ENCODE measurements at regions of chr10 and their contacts with region 1.

Region 1: GRCh38 chr10:99303899-99304861 is 25.0 kb upstream of the CNNM1 start:
- DNase-seq: no peak
- ATAC-seq: no peak
- H3K4me3 ChIP-seq: no peak overlapping the region
- H3K4me3 Mint-ChIP-seq: no peak overlapping the region
- H3K27ac ChIP-seq: no peak overlapping the region
- H3K27ac Mint-ChIP-seq: no peak overlapping the region
- H3K4me1 ChIP-seq: no peaks in the 10 kb centered on the region
- H3K4me1 Mint-ChIP-seq: no peaks in the 10 kb centered on the region
- H3K27me3 ChIP-seq: no peaks in the 10 kb centered on the region
- H3K27me3 Mint-ChIP-seq: peaks cover 11 to 33% (median 20%) of the 10 kb centered on the region in 5 donors

Region 2: GRCh38 chr10:99290306-99290705 is 13.9 kb before region 1 on chr10:
- CTCF ChIA-PET with region 1: interaction called, 4 read pairs
- POLR2A ChIA-PET with region 1: no interaction called
- intact Hi-C with region 1: loop called in 1 of 2 experiments (anchors 1 kb)
- DNase-seq: no peak
- ATAC-seq: no peak
- H3K4me3 ChIP-seq: no peak overlapping the region
- H3K4me3 Mint-ChIP-seq: no peak overlapping the region
- H3K27ac ChIP-seq: no peak overlapping the region
- H3K27ac Mint-ChIP-seq: no peak overlapping the region
- H3K4me1 ChIP-seq: no peaks in the 10 kb centered on the region
- H3K4me1 Mint-ChIP-seq: no peaks in the 10 kb centered on the region
- H3K27me3 ChIP-seq: no peaks in the 10 kb centered on the region
- H3K27me3 Mint-ChIP-seq: peaks cover 4 to 19% (median 11%) of the 10 kb centered on the region in 5 donors

Region 3: GRCh38 chr10:99331207-99331803 is 27.1 kb after region 1 on chr10:
- CTCF ChIA-PET with region 1: no interaction called
- POLR2A ChIA-PET with region 1: no interaction called
- intact Hi-C with region 1: no loop called
- DNase-seq: no peak
- ATAC-seq: no peak
- H3K4me3 ChIP-seq: no peak overlapping the region
- H3K4me3 Mint-ChIP-seq: peak overlapping the region; percentile 11 to 71 (median 54)
- H3K27ac ChIP-seq: no peak overlapping the region
- H3K27ac Mint-ChIP-seq: no peak overlapping the region
- H3K4me1 ChIP-seq: no peaks in the 10 kb centered on the region
- H3K4me1 Mint-ChIP-seq: peaks cover 0 to 26% (median 15%) of the 10 kb centered on the region in 7 donors
- H3K27me3 ChIP-seq: peaks cover 0 to 6% of the 10 kb centered on the region in 2 donors
- H3K27me3 Mint-ChIP-seq: peaks cover 30 to 54% (median 42%) of the 10 kb centered on the region in 5 donors

Region 4: DNA sequence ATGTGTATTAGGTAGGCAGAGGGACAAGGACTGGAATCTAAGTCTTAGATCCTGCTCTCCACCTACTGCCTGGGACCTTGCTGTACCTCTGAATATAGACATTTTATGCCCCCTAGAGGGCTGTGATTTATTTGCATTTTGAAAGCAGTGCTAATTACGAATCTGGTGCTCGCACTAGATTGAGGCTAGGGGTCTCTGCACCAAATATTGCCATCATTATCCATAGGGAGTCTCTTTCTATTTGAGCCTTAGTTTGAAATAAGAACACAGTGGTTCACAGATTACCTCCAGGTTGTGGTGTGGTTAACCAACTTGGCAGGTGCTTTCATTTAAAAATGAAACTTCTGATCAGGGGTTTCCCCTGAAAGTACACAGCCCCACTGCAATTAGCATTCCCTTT is 66.8 kb after region 1 on chr10:
- CTCF ChIA-PET with region 1: no interaction called
- POLR2A ChIA-PET with region 1: no interaction called
- intact Hi-C with region 1: no loop called
- DNase-seq: no peak
- ATAC-seq: no peak
- H3K4me3 ChIP-seq: no peak overlapping the region
- H3K4me3 Mint-ChIP-seq: peak overlapping the region in 1 of 10 donors; percentile 5
- H3K27ac ChIP-seq: no peak overlapping the region
- H3K27ac Mint-ChIP-seq: no peak overlapping the region
- H3K4me1 ChIP-seq: no peaks in the 10 kb centered on the region
- H3K4me1 Mint-ChIP-seq: peaks cover 0 to 10% (median 5%) of the 10 kb centered on the region in 7 donors
- H3K27me3 ChIP-seq: no peaks in the 10 kb centered on the region
- H3K27me3 Mint-ChIP-seq: peaks cover 10 to 86% (median 23%) of the 10 kb centered on the region in 5 donors

Measured in naive thymus-derived CD4-positive, alpha-beta T cell (primary cell).